Endothelial cell of umbilical vein (primary cell): ENCODE measurements at regions of chr6 and their contacts with region 1.

Region 1: DNA sequence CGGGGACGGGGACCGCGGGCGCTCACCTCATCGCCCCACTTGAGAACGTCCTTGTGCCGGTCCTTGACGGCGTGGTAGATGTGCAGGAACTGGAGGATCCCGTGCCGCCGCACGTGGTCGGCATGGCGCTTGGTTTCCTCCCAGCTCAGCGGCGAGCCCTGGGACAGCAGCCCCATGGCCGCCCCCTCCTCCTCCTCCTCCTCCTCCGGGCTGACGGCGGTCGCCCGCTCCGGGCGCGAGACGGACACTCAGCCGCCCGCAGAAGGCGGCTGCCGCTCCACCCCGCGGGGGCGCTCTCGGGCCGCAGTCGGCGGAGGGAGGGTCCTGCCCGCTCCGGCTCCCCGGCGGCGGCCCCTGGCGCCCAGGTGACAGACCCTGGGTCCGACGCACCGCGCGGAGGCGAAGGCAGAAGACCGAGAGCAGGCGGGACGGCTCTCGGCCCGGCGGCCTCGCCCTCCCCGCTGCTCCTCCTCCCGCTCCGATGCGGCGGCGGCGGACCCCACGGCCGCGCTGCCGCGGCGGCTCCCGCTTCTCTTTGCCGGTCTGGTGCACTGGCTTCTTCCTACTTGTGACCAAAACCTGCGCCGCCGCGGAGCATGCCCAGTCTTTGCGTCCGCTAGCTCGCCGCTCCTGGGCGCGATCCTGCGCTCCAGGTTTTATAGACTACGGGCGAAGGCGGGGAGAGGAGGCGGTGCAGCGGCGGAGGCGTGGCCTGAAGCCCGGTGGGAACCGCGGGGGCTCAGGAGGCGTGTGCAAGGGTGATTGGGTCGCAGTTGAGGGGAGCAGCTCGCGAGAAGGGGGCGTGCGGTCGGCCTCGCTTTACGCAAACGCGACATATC is at the start of gene GCLC:
- DNase-seq: peak; percentile 97
- H3K4me3 ChIP-seq: peak within 1 kb of the TSS; percentile 44 to 73 (median 63)
- H3K27ac ChIP-seq: peak within 1 kb of the TSS; percentile 53
- H3K4me1 ChIP-seq: peaks cover 24% of the 10 kb centered on the region
- H3K27me3 ChIP-seq: no peaks in the 10 kb centered on the region
- CTCF ChIP-seq: peak; percentile 39 to 65
- POLR2A ChIP-seq: peak; percentile 89
- total RNA-seq, gene GCLC: 17.3 and 22.8 TPM in 2 replicates

Region 2: GRCh38 chr6:53309059-53309900 is 235.4 kb before region 1 on chr6:
- CTCF ChIA-PET with region 1: no interaction called
- POLR2A ChIA-PET with region 1: no interaction called
- dilution Hi-C with region 1: no loop called
- intact Hi-C with region 1: loop called (anchors 10 kb)
- DNase-seq: peak; percentile 29
- H3K4me3 ChIP-seq: no peak overlapping the region
- H3K27ac ChIP-seq: peak overlapping the region; percentile 34
- H3K4me1 ChIP-seq: peaks cover 33% of the 10 kb centered on the region
- H3K27me3 ChIP-seq: no peaks in the 10 kb centered on the region
- CTCF ChIP-seq: no peak
- POLR2A ChIP-seq: no peak

Region 3: GRCh38 chr6:53492860-53493634 is 51.6 kb before region 1 on chr6:
- CTCF ChIA-PET with region 1: interaction called, 17 read pairs
- POLR2A ChIA-PET with region 1: no interaction called
- dilution Hi-C with region 1: no loop called
- intact Hi-C with region 1: loop called (anchors 1 kb)
- DNase-seq: peak; percentile 74
- H3K4me3 ChIP-seq: peak overlapping the region in 1 of 3 experiments; percentile 31
- H3K27ac ChIP-seq: no peak overlapping the region
- H3K4me1 ChIP-seq: no peaks in the 10 kb centered on the region
- H3K27me3 ChIP-seq: no peaks in the 10 kb centered on the region
- CTCF ChIP-seq: peak; percentile 51 to 54
- POLR2A ChIP-seq: no peak

Region 4: GRCh38 chr6:53673162-53673683 is 128.5 kb after region 1 on chr6:
- CTCF ChIA-PET with region 1: no interaction called
- POLR2A ChIA-PET with region 1: no interaction called
- dilution Hi-C with region 1: no loop called
- intact Hi-C with region 1: no loop called
- DNase-seq: peak; percentile 86
- H3K4me3 ChIP-seq: no peak overlapping the region
- H3K27ac ChIP-seq: peak overlapping the region; percentile 4
- H3K4me1 ChIP-seq: peaks cover 8% of the 10 kb centered on the region
- H3K27me3 ChIP-seq: no peaks in the 10 kb centered on the region
- CTCF ChIP-seq: no peak
- POLR2A ChIP-seq: no peak

Region 5: DNA sequence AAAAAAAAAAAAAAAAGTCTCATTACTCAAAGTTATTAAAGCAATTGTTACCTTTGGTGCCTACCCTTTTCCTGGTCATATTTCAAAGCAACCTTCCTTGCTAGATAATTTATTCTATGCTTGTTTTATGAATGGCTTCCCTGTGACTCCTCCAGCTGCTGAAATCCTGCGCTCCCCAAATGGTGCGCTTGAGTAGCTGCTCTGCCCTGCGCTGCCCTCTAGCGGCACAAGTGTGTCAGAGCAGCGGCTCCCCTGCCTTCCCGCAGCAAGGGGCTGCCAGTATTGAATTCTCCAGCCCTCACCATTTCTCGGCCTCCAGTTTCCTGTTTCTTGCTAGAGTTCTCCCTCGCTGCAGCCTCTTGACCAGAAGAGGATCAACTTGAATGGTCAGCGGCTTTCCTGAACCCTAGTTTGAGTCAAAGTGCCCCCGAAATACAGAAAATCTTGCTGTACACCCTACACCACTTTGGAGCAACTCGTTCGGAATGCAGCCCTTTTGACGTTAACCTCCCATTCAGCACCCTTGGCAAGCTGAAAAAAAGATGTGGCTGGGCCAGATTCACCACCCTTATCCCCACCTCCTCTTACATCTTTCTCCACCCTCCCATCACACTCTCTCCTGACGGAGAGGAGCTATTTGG is 181.2 kb after region 1 on chr6:
- CTCF ChIA-PET with region 1: interaction called, 7 read pairs
- POLR2A ChIA-PET with region 1: no interaction called
- dilution Hi-C with region 1: no loop called
- intact Hi-C with region 1: loop called (anchors 1 kb)
- DNase-seq: peak; percentile 70
- H3K4me3 ChIP-seq: no peak overlapping the region
- H3K27ac ChIP-seq: no peak overlapping the region
- H3K4me1 ChIP-seq: no peaks in the 10 kb centered on the region
- H3K27me3 ChIP-seq: no peaks in the 10 kb centered on the region
- CTCF ChIP-seq: peak; percentile 91 to 98
- POLR2A ChIP-seq: no peak

Region 6: GRCh38 chr6:53794720-53795253 is 250.1 kb after region 1 on chr6 and contains the start of gene LRRC1:
- CTCF ChIA-PET with region 1: no interaction called
- POLR2A ChIA-PET with region 1: no interaction called
- dilution Hi-C with region 1: no loop called
- intact Hi-C with region 1: loop called (anchors 2 kb)
- DNase-seq: peak; percentile 95
- H3K4me3 ChIP-seq: peak within 1 kb of the TSS; percentile 58 to 76 (median 72)
- H3K27ac ChIP-seq: peak within 1 kb of the TSS; percentile 43
- H3K4me1 ChIP-seq: peaks cover 25% of the 10 kb centered on the region
- H3K27me3 ChIP-seq: no peaks in the 10 kb centered on the region
- CTCF ChIP-seq: no peak
- POLR2A ChIP-seq: peak; percentile 83
- total RNA-seq, gene LRRC1: 10.6 and 11.7 TPM in 2 replicates

Region 7: GRCh38 chr6:54191461-54191860 is 646.8 kb after region 1 on chr6:
- CTCF ChIA-PET with region 1: no interaction called
- POLR2A ChIA-PET with region 1: no interaction called
- dilution Hi-C with region 1: no loop called
- intact Hi-C with region 1: loop called (anchors 5 kb)
- DNase-seq: peak; percentile 79
- H3K4me3 ChIP-seq: no peak overlapping the region
- H3K27ac ChIP-seq: no peak overlapping the region
- H3K4me1 ChIP-seq: peaks cover 25% of the 10 kb centered on the region
- H3K27me3 ChIP-seq: no peaks in the 10 kb centered on the region
- CTCF ChIP-seq: no peak
- POLR2A ChIP-seq: no peak